BJ (cell line): ENCODE measurements at regions of chr15 and their contacts with region 1.

Region 1: GRCh38 chr15:39580117-39580484 is 778 bp upstream of the THBS1 start:
- DNase-seq: peak; percentile 96
- H3K4me3 ChIP-seq: peak overlapping the region; percentile 54
- H3K27me3 ChIP-seq: no peaks in the 10 kb centered on the region
- CTCF ChIP-seq: peak; percentile 85

Region 2: DNA sequence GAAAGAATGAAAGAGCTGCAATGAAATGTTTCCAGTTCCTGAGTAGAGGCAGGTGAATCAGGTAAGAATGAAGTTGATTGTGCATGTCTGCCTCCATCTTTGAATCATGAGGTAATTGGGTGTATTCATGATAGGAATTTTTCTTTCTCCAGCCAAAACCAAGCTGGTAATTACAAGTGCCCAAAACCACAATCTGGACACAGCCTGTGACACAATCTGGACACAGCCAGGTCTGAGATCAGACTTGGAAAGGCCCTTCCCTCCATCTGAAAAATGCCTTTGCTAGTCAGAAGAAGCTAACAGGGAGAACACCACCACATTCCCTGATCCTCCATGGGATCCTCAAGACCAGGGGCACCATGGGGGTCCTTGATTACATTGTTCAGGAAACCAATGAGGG is 337.8 kb before region 1 on chr15:
- CTCF ChIA-PET with region 1: interaction called, 3 read pairs
- POLR2A ChIA-PET with region 1: interaction called, 21 read pairs
- DNase-seq: peak; percentile 77
- H3K4me3 ChIP-seq: no peak overlapping the region
- H3K27me3 ChIP-seq: no peaks in the 10 kb centered on the region
- CTCF ChIP-seq: no peak

Region 3: GRCh38 chr15:39301589-39301999 is 278.5 kb before region 1 on chr15:
- CTCF ChIA-PET with region 1: interaction called, 6 read pairs
- POLR2A ChIA-PET with region 1: interaction called, 36 read pairs
- DNase-seq: peak; percentile 88
- H3K4me3 ChIP-seq: no peak overlapping the region
- H3K27me3 ChIP-seq: no peaks in the 10 kb centered on the region
- CTCF ChIP-seq: no peak

Region 4: GRCh38 chr15:39376371-39376909 is 203.7 kb before region 1 on chr15:
- CTCF ChIA-PET with region 1: interaction called, 3 read pairs
- POLR2A ChIA-PET with region 1: interaction called, 11 read pairs
- DNase-seq: peak; percentile 41
- H3K4me3 ChIP-seq: no peak overlapping the region
- H3K27me3 ChIP-seq: no peaks in the 10 kb centered on the region
- CTCF ChIP-seq: no peak

Region 5: DNA sequence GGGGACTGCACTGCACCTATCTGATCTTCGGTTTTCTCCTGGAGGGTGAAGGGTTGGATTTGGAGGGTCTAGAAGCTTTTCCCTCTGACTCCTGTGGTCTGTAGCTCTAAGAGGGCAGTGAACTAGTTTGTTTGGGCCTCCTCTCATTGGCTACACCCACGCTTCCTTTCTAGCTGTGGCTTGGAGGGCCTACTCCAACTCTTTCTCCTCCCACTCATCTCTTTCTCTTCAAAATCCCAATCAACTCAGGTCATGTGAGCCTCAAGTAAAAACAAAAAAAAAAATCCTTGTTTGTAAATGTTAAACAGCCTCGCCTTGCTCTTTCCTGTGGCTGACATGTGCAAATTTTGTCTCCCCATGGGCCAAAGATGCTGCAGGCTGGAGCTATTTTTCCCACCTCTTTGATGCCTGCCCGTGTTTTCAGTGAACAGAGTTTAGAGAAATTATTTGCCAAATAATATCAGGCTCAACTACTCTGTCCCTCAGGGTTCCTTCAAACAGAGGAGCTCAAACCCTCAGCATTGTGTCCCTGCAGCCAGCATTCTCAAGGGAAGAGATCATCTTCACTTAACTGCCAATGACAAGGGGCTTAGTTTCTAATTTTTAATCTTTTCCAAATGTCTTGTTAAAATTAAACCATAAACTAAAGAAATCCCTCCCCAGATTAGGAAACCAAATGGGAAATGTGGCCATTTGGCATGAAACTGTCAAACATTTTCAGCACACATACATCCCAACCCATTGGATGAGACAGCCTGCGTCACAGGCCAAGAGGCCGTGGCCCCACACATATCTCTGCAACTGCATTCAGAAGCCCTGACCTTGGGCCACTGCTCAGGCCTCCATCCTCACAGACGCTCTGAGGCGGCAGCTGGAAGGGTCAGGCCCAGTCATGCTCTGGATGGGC is 114.0 kb before region 1 on chr15:
- CTCF ChIA-PET with region 1: interaction called, 14 read pairs
- POLR2A ChIA-PET with region 1: interaction called, 22 read pairs
- DNase-seq: peak; percentile 94
- H3K4me3 ChIP-seq: no peak overlapping the region
- H3K27me3 ChIP-seq: no peaks in the 10 kb centered on the region
- CTCF ChIP-seq: no peak

Region 6: DNA sequence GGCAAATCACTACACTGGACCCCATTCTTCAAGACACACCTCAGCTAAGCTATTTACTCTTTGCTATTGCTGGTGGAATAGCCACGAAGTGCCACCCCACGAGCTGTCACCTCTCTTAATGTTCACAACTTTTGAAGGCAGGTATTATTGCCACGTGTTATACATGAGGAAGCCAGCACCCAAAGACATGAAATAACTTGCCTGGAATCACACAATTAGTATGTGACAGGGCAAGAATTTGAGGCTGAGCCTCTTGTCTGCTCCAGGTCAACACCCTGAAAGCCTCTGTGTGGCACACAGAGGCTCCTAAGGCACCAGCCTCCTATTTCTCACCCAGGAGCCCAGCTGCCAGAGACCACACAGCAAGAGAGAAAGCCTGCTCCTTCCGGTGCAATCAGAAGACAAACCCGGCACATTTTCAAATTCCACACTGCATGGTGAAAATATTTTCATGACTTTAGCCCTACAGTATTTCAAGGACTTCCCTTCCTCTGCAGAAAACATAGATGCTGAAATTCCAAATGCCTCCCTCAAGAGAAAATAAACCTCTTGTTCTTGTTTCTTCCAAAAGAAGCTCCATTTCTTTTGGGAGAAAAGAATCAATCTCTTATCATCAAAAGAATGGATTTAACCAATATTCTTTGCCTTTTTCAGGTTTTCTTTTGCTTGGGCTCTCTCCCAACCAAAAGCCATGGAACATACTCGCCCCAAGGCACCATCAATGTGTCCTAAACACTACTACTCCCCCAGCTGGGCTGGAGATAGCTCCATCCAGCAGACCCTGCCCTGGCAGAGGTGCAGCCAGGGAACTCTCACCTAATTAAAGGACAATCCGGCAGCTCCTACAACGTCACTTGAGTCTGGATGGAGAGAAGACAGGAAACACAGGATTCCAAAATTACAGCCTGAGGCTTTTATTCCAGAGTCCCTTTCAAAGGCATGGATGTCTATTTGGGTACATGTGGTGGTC is 83.9 kb before region 1 on chr15:
- CTCF ChIA-PET with region 1: interaction called, 17 read pairs
- POLR2A ChIA-PET with region 1: interaction called, 6 read pairs
- DNase-seq: no peak
- H3K4me3 ChIP-seq: no peak overlapping the region
- H3K27me3 ChIP-seq: no peaks in the 10 kb centered on the region
- CTCF ChIP-seq: no peak